Transverse colon (tissue), 4 donors: ENCODE measurements at regions of chr5 and their contacts with region 1.

Region 1: DNA sequence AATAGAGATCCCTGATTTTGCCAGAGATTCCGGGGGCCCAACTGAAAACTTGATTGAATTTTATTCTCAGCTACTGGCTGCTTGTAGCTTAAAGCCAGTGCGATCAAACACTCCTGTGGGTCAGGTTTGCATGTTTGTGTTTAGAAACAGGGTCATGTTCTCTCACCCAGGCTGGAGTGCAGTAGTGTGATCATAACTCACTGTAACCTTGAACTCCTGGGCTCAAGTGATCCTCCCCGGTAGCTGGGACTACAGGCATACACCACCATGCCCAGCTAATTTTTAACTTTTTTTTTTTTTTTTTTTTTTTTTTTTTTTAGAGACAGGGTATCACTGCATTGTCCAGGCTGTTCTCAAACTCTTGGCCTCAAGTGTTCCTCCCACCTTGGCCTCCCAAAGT is 66.6 kb downstream of the LRRC70 start:
- DNase-seq: no peak
- H3K4me3 ChIP-seq: no peak overlapping the region
- H3K27ac ChIP-seq: no peak overlapping the region
- H3K4me1 ChIP-seq: no peaks in the 10 kb centered on the region
- H3K27me3 ChIP-seq: no peaks in the 10 kb centered on the region
- CTCF ChIP-seq: no peak
- EP300 ChIP-seq: no peak
- POLR2A ChIP-seq: no peak

Region 2: DNA sequence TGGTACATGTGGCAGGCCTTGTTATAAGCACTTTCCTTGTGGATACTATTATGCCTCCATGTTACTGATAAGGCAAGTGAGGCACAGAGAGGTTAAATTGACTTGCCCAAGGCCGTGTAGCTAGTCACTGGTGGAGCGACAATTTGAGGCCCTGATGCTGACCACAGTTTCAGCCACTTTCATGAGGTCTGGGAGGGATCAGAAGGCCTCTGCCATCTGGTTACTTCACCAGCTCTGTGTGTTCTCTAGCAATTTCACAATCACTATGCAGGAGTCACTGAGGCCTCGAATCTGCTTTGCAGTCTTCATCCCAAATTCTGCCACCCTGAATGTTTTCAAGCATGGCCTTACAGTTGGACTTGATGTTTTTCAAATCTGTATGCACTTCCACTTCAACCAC is 57.5 kb before region 1 on chr5:
- in situ Hi-C with region 1: no loop called
- intact Hi-C with region 1: no loop called
- DNase-seq: no peak
- H3K4me3 ChIP-seq: no peak overlapping the region
- H3K27ac ChIP-seq: no peak overlapping the region
- H3K4me1 ChIP-seq: no peaks in the 10 kb centered on the region
- H3K27me3 ChIP-seq: no peaks in the 10 kb centered on the region
- CTCF ChIP-seq: no peak
- EP300 ChIP-seq: no peak
- POLR2A ChIP-seq: no peak

Region 3: GRCh38 chr5:62606878-62607277 is 38.3 kb before region 1 on chr5:
- in situ Hi-C with region 1: no loop called
- intact Hi-C with region 1: loop called (anchors 1 kb)
- DNase-seq: no peak
- H3K4me3 ChIP-seq: no peak overlapping the region
- H3K27ac ChIP-seq: no peak overlapping the region
- H3K4me1 ChIP-seq: no peaks in the 10 kb centered on the region
- H3K27me3 ChIP-seq: no peaks in the 10 kb centered on the region
- CTCF ChIP-seq: no peak
- EP300 ChIP-seq: no peak
- POLR2A ChIP-seq: no peak